ENCODE measurements at regions of chr3 and their contacts with region 1.

Region 1: DNA sequence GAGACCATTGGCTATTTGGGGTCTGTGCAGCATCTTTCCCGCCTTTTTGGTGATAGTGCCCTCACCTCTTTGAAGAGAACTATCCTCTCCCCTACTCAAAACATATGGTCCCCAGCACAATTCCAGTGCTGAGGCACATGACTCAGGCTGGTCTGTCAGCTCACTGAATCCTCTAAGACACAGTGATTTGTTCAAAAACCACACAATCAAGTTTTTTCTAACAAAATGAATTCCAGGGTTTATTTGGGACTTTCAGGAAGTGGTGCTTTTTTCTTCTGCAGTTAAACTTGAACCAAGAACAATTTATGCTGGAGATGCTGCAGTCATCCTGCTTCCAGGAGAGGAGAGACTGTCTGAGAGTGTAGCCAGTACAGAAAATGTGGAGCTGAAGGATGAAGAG is 142.5 kb upstream of the LMCD1 start:
- DNase-seq: no peak
- ATAC-seq: no peak
- H3K4me3 ChIP-seq: no peak overlapping the region
- H3K4me3 Mint-ChIP-seq: peak overlapping the region in 4 of 10 donors; percentile 17 to 70 (median 35)
- H3K27ac ChIP-seq: no peak overlapping the region
- H3K27ac Mint-ChIP-seq: peak overlapping the region; percentile 19 to 81 (median 71)
- H3K4me1 ChIP-seq: peaks cover 32 to 35% of the 10 kb centered on the region in 2 donors
- H3K4me1 Mint-ChIP-seq: peaks cover 24 to 64% (median 58%) of the 10 kb centered on the region in 7 donors
- H3K27me3 ChIP-seq: no peaks in the 10 kb centered on the region
- H3K27me3 Mint-ChIP-seq: peaks cover 0 to 6% (median 0%) of the 10 kb centered on the region in 5 donors

Region 2: DNA sequence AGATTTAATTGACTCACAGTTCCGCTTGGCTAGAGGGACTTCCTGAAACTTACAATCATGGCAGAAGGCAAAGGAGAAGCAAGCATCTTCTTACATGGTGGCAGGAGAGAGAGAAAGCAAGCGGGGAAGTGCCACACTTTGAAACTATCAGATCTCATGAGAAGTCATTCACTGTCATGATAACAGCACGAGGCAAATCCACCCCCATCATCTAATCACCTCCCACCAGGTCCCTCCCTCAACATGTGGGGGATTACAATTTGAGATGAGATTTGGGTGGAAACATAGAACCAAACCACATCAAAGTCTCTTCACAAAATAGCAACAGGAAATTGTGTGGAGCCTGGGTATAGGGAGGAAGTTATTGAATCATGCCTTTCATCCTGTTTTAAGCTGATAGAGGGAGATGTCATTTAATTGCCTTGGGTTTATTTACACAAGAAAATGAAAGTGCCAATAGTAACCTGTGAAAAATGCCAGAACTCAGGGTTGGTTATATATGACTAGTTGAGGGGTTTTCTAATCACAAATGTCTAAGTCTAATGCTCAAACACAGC is 482.3 kb before region 1 on chr3:
- CTCF ChIA-PET with region 1: no interaction called
- POLR2A ChIA-PET with region 1: no interaction called
- intact Hi-C with region 1: loop called in 1 of 2 experiments (anchors 5 kb)
- DNase-seq: peak in 8 of 9 donors; percentile 23 to 92 (median 82)
- ATAC-seq: peak; percentile 89
- H3K4me3 ChIP-seq: no peak overlapping the region
- H3K4me3 Mint-ChIP-seq: peak overlapping the region; percentile 52 to 87 (median 68)
- H3K27ac ChIP-seq: peak overlapping the region; percentile 27
- H3K27ac Mint-ChIP-seq: peak overlapping the region; percentile 79 to 97 (median 88)
- H3K4me1 ChIP-seq: peaks cover 11 to 27% of the 10 kb centered on the region in 2 donors
- H3K4me1 Mint-ChIP-seq: peaks cover 9 to 81% (median 51%) of the 10 kb centered on the region in 7 donors
- H3K27me3 ChIP-seq: no peaks in the 10 kb centered on the region
- H3K27me3 Mint-ChIP-seq: no peaks in the 10 kb centered on the region

Region 3: GRCh38 chr3:8301728-8302462 is 57.2 kb before region 1 on chr3:
- CTCF ChIA-PET with region 1: no interaction called
- POLR2A ChIA-PET with region 1: no interaction called
- intact Hi-C with region 1: loop called in 1 of 2 experiments (anchors 2 kb)
- DNase-seq: peak in 7 of 9 donors; percentile 16 to 56 (median 44)
- ATAC-seq: peak; percentile 50
- H3K4me3 ChIP-seq: no peak overlapping the region
- H3K4me3 Mint-ChIP-seq: no peak overlapping the region
- H3K27ac ChIP-seq: no peak overlapping the region
- H3K27ac Mint-ChIP-seq: peak overlapping the region in 5 of 9 donors; percentile 10 to 63 (median 37)
- H3K4me1 ChIP-seq: no peaks in the 10 kb centered on the region
- H3K4me1 Mint-ChIP-seq: peaks cover 0 to 15% (median 7%) of the 10 kb centered on the region in 7 donors
- H3K27me3 ChIP-seq: no peaks in the 10 kb centered on the region
- H3K27me3 Mint-ChIP-seq: peaks cover 0 to 4% (median 0%) of the 10 kb centered on the region in 5 donors

Region 4: GRCh38 chr3:8324740-8325139 is 34.4 kb before region 1 on chr3:
- CTCF ChIA-PET with region 1: interaction called, 4 read pairs
- POLR2A ChIA-PET with region 1: interaction called, 3 read pairs
- intact Hi-C with region 1: loop called in 1 of 2 experiments (anchors 1 kb)
- DNase-seq: peak; percentile 16 to 54 (median 36)
- ATAC-seq: peak; percentile 88
- H3K4me3 ChIP-seq: no peak overlapping the region
- H3K4me3 Mint-ChIP-seq: no peak overlapping the region
- H3K27ac ChIP-seq: no peak overlapping the region
- H3K27ac Mint-ChIP-seq: peak overlapping the region in 3 of 9 donors; percentile 1 to 22 (median 13)
- H3K4me1 ChIP-seq: peaks cover 0 to 5% of the 10 kb centered on the region in 2 donors
- H3K4me1 Mint-ChIP-seq: peaks cover 0 to 26% (median 15%) of the 10 kb centered on the region in 7 donors
- H3K27me3 ChIP-seq: no peaks in the 10 kb centered on the region
- H3K27me3 Mint-ChIP-seq: peaks cover 0 to 5% (median 0%) of the 10 kb centered on the region in 5 donors

Region 5: GRCh38 chr3:8336456-8336855 is 22.7 kb before region 1 on chr3:
- CTCF ChIA-PET with region 1: interaction called, 3 read pairs
- POLR2A ChIA-PET with region 1: interaction called, 5 read pairs
- intact Hi-C with region 1: loop called in 1 of 2 experiments (anchors 2 kb)
- DNase-seq: no peak
- ATAC-seq: no peak
- H3K4me3 ChIP-seq: no peak overlapping the region
- H3K4me3 Mint-ChIP-seq: no peak overlapping the region
- H3K27ac ChIP-seq: no peak overlapping the region
- H3K27ac Mint-ChIP-seq: no peak overlapping the region
- H3K4me1 ChIP-seq: no peaks in the 10 kb centered on the region
- H3K4me1 Mint-ChIP-seq: peaks cover 0 to 23% (median 3%) of the 10 kb centered on the region in 7 donors
- H3K27me3 ChIP-seq: no peaks in the 10 kb centered on the region
- H3K27me3 Mint-ChIP-seq: peaks cover 0 to 6% (median 0%) of the 10 kb centered on the region in 5 donors

Region 6: DNA sequence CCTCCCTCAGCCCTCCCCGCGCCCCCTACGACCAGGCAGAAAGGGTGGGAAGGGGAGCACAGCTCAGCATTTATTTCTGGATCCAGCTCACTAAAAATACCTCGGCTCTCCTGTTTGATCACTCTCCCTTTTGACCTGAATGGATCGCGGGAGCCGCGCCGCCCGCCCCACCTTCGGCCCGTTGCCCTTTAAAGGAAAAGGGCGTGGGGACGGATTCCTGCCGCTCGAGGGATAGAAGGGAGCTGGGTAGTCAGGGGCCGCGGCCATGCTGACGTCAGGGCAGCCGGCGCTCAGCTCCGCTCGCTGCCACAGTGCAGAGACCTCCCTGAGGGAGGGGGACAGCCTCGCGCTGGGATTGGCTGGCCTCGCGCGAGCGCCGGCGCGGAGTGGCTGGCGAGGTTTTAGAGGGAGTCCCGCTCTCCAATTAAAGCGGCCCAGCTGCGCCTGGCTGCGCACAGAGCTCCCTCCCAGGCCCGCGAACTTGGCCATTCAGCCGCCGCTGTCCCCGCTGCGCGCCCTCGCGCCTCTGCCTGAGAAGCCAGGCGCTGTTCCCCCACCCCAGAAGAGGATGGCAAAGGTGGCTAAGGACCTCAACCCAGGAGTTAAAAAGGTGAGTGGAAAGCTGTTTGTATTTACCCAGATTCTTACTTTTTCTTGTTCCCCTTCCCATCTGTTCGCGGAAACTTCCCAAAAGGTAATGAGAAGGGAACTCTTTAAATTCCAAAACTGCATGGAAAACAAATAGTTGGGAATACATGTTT is 142.4 kb after region 1 on chr3 and contains the start of gene LMCD1:
- CTCF ChIA-PET with region 1: no interaction called
- POLR2A ChIA-PET with region 1: no interaction called
- intact Hi-C with region 1: loop called in 1 of 2 experiments (anchors 1 kb)
- DNase-seq: peak; percentile 51 to 74 (median 68)
- ATAC-seq: peak; percentile 98
- H3K4me3 ChIP-seq: peak within 1 kb of the TSS; percentile 50
- H3K4me3 Mint-ChIP-seq: peak within 1 kb of the TSS; percentile 80 to 90 (median 84)
- H3K27ac ChIP-seq: peak within 1 kb of the TSS; percentile 22
- H3K27ac Mint-ChIP-seq: peak within 1 kb of the TSS in 4 of 9 donors; percentile 21 to 62 (median 45)
- H3K4me1 ChIP-seq: no peaks in the 10 kb centered on the region
- H3K4me1 Mint-ChIP-seq: peaks cover 2 to 14% (median 6%) of the 10 kb centered on the region in 7 donors
- H3K27me3 ChIP-seq: no peaks in the 10 kb centered on the region
- H3K27me3 Mint-ChIP-seq: peaks cover 3 to 29% (median 8%) of the 10 kb centered on the region in 5 donors
- total RNA-seq, gene LMCD1: 0.56 TPM in 1 of 5 experiments, not detected in the others

Region 7: DNA sequence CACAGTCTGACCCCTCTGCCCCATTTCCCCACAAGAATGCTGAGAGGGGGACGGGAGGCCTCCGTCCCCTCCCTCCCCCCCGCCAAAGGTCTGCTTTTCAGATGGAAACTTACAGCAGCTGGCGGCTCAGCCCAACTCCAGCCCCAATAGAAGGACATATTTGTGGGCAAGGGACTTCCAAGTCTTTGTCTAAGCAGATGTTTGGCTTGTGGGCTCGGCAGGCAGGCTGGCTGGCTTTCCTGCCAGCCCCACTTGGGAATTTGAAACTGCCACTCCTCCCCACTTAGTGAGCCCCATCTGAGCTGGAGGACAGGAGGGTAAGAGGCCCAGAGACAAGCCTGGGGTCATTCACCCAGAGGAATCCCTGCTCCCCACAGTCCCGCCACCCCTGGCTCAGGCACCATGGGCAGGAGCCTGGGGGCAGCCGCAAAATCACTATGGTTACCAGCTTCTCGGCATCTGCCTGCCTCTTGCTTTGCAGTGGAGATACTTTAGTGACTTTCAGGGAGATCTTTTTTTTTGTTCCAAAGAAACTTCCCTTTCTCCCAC is 196.1 kb after region 1 on chr3:
- CTCF ChIA-PET with region 1: no interaction called
- POLR2A ChIA-PET with region 1: no interaction called
- intact Hi-C with region 1: no loop called
- DNase-seq: no peak
- ATAC-seq: no peak
- H3K4me3 ChIP-seq: no peak overlapping the region
- H3K4me3 Mint-ChIP-seq: no peak overlapping the region
- H3K27ac ChIP-seq: no peak overlapping the region
- H3K27ac Mint-ChIP-seq: no peak overlapping the region
- H3K4me1 ChIP-seq: no peaks in the 10 kb centered on the region
- H3K4me1 Mint-ChIP-seq: no peaks in the 10 kb centered on the region
- H3K27me3 ChIP-seq: no peaks in the 10 kb centered on the region
- H3K27me3 Mint-ChIP-seq: peaks cover 0 to 12% (median 0%) of the 10 kb centered on the region in 5 donors